Psoas muscle (tissue), 8 donors: ENCODE measurements at regions of chr17 and their contacts with region 1.

Region 1: GRCh38 chr17:9367156-9367555 is 208.5 kb downstream of the STX8 start:
- DNase-seq: peak in 1 of 2 donors; percentile 59
- ATAC-seq: peak; percentile 73 to 84 (median 80)
- H3K4me3 ChIP-seq: no peak overlapping the region
- H3K27ac ChIP-seq: peak overlapping the region; percentile 66
- H3K4me1 ChIP-seq: peaks cover 24% of the 10 kb centered on the region
- H3K27me3 ChIP-seq: no peaks in the 10 kb centered on the region
- CTCF ChIP-seq: no peak

Region 2: GRCh38 chr17:9330612-9331271 is 36.4 kb before region 1 on chr17:
- intact Hi-C with region 1: no loop called
- DNase-seq: no peak
- ATAC-seq: no peak
- H3K4me3 ChIP-seq: no peak overlapping the region
- H3K27ac ChIP-seq: no peak overlapping the region
- H3K4me1 ChIP-seq: peaks cover 4% of the 10 kb centered on the region
- H3K27me3 ChIP-seq: no peaks in the 10 kb centered on the region
- CTCF ChIP-seq: no peak

Region 3: GRCh38 chr17:9427465-9428315 is 60.5 kb after region 1 on chr17:
- intact Hi-C with region 1: loop called in 1 of 2 experiments (anchors 5 kb)
- DNase-seq: peak; percentile 30 to 65
- ATAC-seq: peak; percentile 89 to 96 (median 94)
- H3K4me3 ChIP-seq: no peak overlapping the region
- H3K27ac ChIP-seq: peak overlapping the region; percentile 59
- H3K4me1 ChIP-seq: peaks cover 20% of the 10 kb centered on the region
- H3K27me3 ChIP-seq: no peaks in the 10 kb centered on the region
- CTCF ChIP-seq: no peak